WTC11 (cell line): ENCODE measurements at regions of chr10 and their contacts with region 1.

Region 1: GRCh38 chr10:68600041-68600778 is 40.1 kb downstream of the TET1 start:
- DNase-seq: peak; percentile 82
- ATAC-seq: peak; percentile 94
- H3K4me3 Mint-ChIP-seq: peak overlapping the region; percentile 67
- H3K27ac Mint-ChIP-seq: peak overlapping the region; percentile 98
- H3K4me1 Mint-ChIP-seq: peaks cover 72% of the 10 kb centered on the region
- H3K27me3 Mint-ChIP-seq: no peaks in the 10 kb centered on the region
- CTCF ChIP-seq: no peak

Region 2: DNA sequence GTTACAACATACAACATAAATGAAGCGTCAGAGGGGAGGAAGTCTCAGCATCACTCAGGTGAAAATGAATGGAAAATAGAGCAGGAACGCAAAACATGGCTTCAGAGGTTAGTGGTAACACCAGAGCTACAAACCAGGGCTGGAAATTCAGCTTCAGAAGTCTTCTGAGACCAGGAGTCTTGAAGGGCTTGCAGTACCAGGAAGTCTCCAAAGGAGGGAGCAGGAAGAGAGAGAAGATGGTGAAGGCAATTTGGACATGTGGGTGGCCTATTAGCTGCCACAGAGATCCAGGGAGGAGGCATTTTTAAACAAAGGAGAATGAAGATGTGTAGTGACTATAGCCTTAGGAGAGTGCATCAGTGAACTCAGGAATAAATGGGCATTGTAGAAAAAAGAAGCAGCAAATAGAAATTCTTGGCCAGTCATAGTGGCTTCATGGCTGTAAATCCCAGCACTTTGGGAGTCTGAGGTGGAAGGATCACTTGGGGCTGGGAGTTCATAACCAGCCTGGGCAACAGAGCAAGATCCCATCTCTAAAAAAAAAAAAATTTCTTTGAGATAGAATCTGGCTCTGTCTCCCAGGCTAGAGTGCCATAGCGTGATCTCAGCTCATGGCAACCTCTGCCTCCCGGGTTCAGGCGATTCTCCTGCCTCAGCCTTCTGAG is 49.3 kb before region 1 on chr10:
- CTCF ChIA-PET with region 1: interaction called, 16 read pairs
- POLR2A ChIA-PET with region 1: interaction called, 3 read pairs
- DNase-seq: peak; percentile 67
- ATAC-seq: peak; percentile 85
- H3K4me3 Mint-ChIP-seq: no peak overlapping the region
- H3K27ac Mint-ChIP-seq: peak overlapping the region; percentile 32; the same call in 1 of the 2 replicates
- H3K4me1 Mint-ChIP-seq: peaks cover 18% of the 10 kb centered on the region
- H3K27me3 Mint-ChIP-seq: no peaks in the 10 kb centered on the region
- CTCF ChIP-seq: peak; percentile 58; the same call in 1 of the 2 replicates

Region 3: GRCh38 chr10:68560186-68560942 is 39.8 kb before region 1 on chr10 and contains the start of gene TET1:
- CTCF ChIA-PET with region 1: interaction called, 6 read pairs
- POLR2A ChIA-PET with region 1: interaction called, 61 read pairs
- DNase-seq: peak; percentile 90
- ATAC-seq: peak; percentile 74
- H3K4me3 Mint-ChIP-seq: peak within 1 kb of the TSS; percentile 98
- H3K27ac Mint-ChIP-seq: peak within 1 kb of the TSS; percentile 85
- H3K4me1 Mint-ChIP-seq: peaks cover 34% of the 10 kb centered on the region
- H3K27me3 Mint-ChIP-seq: no peaks in the 10 kb centered on the region; the same call in 1 of the 2 replicates
- CTCF ChIP-seq: no peak
- total RNA-seq, gene TET1: 59.2 to 71.4 TPM (median 62.0 TPM) in 3 replicates

Region 4: DNA sequence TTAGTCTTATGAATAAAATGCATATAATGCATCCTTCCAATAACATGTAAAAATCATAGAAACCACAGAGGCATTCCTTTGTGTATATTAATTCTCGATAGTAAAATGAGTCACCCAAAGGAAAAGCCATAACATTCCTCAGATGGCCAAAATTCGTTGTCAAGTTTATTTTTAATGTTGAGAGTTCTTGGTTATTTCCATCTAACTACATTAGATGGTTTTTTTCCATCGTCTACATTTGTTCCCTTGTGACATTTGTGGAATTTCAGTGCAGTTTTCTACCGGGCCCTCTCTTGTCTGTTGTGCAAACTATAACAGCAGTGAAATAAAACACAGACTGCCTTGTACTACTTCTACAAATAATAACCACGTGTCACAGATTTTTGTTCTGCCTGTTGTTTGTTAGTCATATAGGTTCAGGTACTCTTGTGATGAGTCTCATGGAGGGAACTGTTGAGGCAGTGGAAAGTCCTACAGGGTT is 66.1 kb after region 1 on chr10:
- CTCF ChIA-PET with region 1: no interaction called
- POLR2A ChIA-PET with region 1: no interaction called
- DNase-seq: no peak
- ATAC-seq: no peak
- H3K4me3 Mint-ChIP-seq: no peak overlapping the region
- H3K27ac Mint-ChIP-seq: no peak overlapping the region
- H3K4me1 Mint-ChIP-seq: no peaks in the 10 kb centered on the region
- H3K27me3 Mint-ChIP-seq: no peaks in the 10 kb centered on the region
- CTCF ChIP-seq: no peak